ENCODE measurements at regions of chr3 and their contacts with region 1.

Region 1: DNA sequence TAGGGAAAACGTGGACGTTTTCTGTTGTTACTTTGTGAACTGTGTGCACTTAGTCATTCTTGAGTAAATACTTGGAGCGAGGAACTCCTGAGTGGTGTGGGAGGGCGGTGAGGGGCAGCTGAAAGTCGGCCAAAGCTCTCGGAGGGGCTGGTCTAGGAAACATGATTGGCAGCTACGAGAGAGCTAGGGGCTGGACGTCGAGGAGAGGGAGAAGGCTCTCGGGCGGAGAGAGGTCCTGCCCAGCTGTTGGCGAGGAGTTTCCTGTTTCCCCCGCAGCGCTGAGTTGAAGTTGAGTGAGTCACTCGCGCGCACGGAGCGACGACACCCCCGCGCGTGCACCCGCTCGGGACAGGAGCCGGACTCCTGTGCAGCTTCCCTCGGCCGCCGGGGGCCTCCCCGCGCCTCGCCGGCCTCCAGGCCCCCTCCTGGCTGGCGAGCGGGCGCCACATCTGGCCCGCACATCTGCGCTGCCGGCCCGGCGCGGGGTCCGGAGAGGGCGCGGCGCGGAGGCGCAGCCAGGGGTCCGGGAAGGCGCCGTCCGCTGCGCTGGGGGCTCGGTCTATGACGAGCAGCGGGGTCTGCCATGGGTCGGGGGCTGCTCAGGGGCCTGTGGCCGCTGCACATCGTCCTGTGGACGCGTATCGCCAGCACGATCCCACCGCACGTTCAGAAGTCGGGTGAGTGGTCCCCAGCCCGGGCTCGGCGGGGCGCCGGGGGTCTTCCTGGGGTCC is at the start of gene TGFBR2:
- DNase-seq: peak; percentile 95
- H3K4me3 Mint-ChIP-seq: peak within 1 kb of the TSS; percentile 66
- H3K27ac Mint-ChIP-seq: peak within 1 kb of the TSS; percentile 82
- H3K4me1 Mint-ChIP-seq: peaks cover 49% of the 10 kb centered on the region
- H3K27me3 Mint-ChIP-seq: no peaks in the 10 kb centered on the region
- CTCF ChIP-seq: no peak
- total RNA-seq, gene TGFBR2: 103 and 105 TPM in 2 replicates

Region 2: DNA sequence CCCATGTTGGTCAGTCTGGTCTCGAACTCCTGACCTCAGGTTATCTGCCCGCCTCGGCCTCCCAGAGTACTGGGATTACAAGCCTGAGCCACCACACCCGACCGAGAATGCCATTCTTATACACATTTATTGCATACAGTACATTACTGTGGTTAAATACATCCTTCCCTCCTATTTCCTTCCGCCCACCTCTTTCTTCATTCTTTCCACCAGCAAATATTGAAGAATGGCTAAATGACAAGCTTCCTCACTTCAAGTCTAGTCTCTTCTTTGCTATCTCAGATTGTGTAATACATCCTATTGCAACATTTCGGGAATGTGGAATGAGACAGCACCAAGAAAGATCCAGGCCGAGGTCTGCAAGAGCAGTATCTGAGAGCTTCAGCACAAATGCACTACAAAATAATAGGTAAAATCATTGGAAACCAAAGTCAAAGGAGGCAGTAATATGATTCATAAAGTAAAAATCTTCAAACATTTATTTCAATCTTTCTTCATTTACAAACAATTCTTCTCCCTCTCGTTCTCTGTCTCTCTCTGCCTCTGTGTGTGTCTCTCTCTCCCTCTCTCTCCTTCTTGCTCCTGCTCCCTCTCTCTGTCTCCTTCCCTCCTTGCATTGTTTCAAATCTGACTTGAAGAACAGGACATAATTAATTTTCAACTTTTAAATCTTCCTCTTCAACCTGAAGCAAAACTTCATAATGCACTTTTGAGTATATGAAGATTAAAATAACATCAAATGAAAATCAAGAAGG is 94.8 kb before region 1 on chr3:
- CTCF ChIA-PET with region 1: no interaction called
- intact Hi-C with region 1: no loop called
- DNase-seq: peak; percentile 43
- H3K4me3 Mint-ChIP-seq: no peak overlapping the region
- H3K27ac Mint-ChIP-seq: peak overlapping the region; percentile 15
- H3K4me1 Mint-ChIP-seq: peaks cover 13% of the 10 kb centered on the region
- H3K27me3 Mint-ChIP-seq: no peaks in the 10 kb centered on the region
- CTCF ChIP-seq: no peak

Region 3: GRCh38 chr3:30544812-30545211 is 61.7 kb before region 1 on chr3:
- CTCF ChIA-PET with region 1: no interaction called
- intact Hi-C with region 1: loop called (anchors 2 kb)
- DNase-seq: no peak
- H3K4me3 Mint-ChIP-seq: no peak overlapping the region
- H3K27ac Mint-ChIP-seq: peak overlapping the region; percentile 30
- H3K4me1 Mint-ChIP-seq: peaks cover 32% of the 10 kb centered on the region
- H3K27me3 Mint-ChIP-seq: no peaks in the 10 kb centered on the region
- CTCF ChIP-seq: no peak

Region 4: GRCh38 chr3:30795176-30795575 is 188.7 kb after region 1 on chr3:
- CTCF ChIA-PET with region 1: no interaction called
- intact Hi-C with region 1: no loop called
- DNase-seq: no peak
- H3K4me3 Mint-ChIP-seq: no peak overlapping the region
- H3K27ac Mint-ChIP-seq: no peak overlapping the region
- H3K4me1 Mint-ChIP-seq: no peaks in the 10 kb centered on the region
- H3K27me3 Mint-ChIP-seq: peaks cover 6% of the 10 kb centered on the region
- CTCF ChIP-seq: no peak

Region 5: GRCh38 chr3:30948426-30948825 is 342.0 kb after region 1 on chr3:
- CTCF ChIA-PET with region 1: no interaction called
- intact Hi-C with region 1: no loop called
- DNase-seq: no peak
- H3K4me3 Mint-ChIP-seq: no peak overlapping the region
- H3K27ac Mint-ChIP-seq: no peak overlapping the region
- H3K4me1 Mint-ChIP-seq: no peaks in the 10 kb centered on the region
- H3K27me3 Mint-ChIP-seq: peaks cover 21% of the 10 kb centered on the region
- CTCF ChIP-seq: no peak

Measured in Calu3 (cell line).